ENCODE measurements at regions of chr14 and their contacts with region 1.

Region 1: GRCh38 chr14:39015360-39015961 is 87.6 kb downstream of the SEC23A start:
- DNase-seq: no peak
- ATAC-seq: no peak
- H3K4me3 Mint-ChIP-seq: no peak overlapping the region
- H3K27ac Mint-ChIP-seq: no peak overlapping the region
- H3K4me1 Mint-ChIP-seq: no peaks in the 10 kb centered on the region
- H3K27me3 Mint-ChIP-seq: no peaks in the 10 kb centered on the region
- CTCF ChIP-seq: peak; percentile 40

Region 2: GRCh38 chr14:37157987-37158386 is 1857.5 kb before region 1 on chr14:
- CTCF ChIA-PET with region 1: no interaction called
- POLR2A ChIA-PET with region 1: no interaction called
- intact Hi-C with region 1: no loop called
- DNase-seq: no peak
- ATAC-seq: no peak
- H3K4me3 Mint-ChIP-seq: no peak overlapping the region
- H3K27ac Mint-ChIP-seq: no peak overlapping the region
- H3K4me1 Mint-ChIP-seq: no peaks in the 10 kb centered on the region
- H3K27me3 Mint-ChIP-seq: no peaks in the 10 kb centered on the region
- CTCF ChIP-seq: no peak

Region 3: GRCh38 chr14:37246427-37246914 is 1769.0 kb before region 1 on chr14:
- CTCF ChIA-PET with region 1: no interaction called
- POLR2A ChIA-PET with region 1: no interaction called
- intact Hi-C with region 1: loop called (anchors 1 kb)
- DNase-seq: no peak
- ATAC-seq: no peak
- H3K4me3 Mint-ChIP-seq: no peak overlapping the region
- H3K27ac Mint-ChIP-seq: no peak overlapping the region
- H3K4me1 Mint-ChIP-seq: no peaks in the 10 kb centered on the region
- H3K27me3 Mint-ChIP-seq: no peaks in the 10 kb centered on the region
- CTCF ChIP-seq: peak; percentile 76

Region 4: GRCh38 chr14:37903343-37904191 is 1111.9 kb before region 1 on chr14:
- CTCF ChIA-PET with region 1: no interaction called
- POLR2A ChIA-PET with region 1: no interaction called
- intact Hi-C with region 1: loop called (anchors 10 kb)
- DNase-seq: no peak
- ATAC-seq: no peak
- H3K4me3 Mint-ChIP-seq: no peak overlapping the region
- H3K27ac Mint-ChIP-seq: no peak overlapping the region
- H3K4me1 Mint-ChIP-seq: no peaks in the 10 kb centered on the region
- H3K27me3 Mint-ChIP-seq: peaks cover 4% of the 10 kb centered on the region
- CTCF ChIP-seq: no peak

Region 5: GRCh38 chr14:38721822-38722431 is 293.5 kb before region 1 on chr14:
- CTCF ChIA-PET with region 1: interaction called, 3 read pairs
- POLR2A ChIA-PET with region 1: no interaction called
- intact Hi-C with region 1: loop called (anchors 1 kb)
- DNase-seq: no peak
- ATAC-seq: peak; percentile 42
- H3K4me3 Mint-ChIP-seq: no peak overlapping the region
- H3K27ac Mint-ChIP-seq: no peak overlapping the region
- H3K4me1 Mint-ChIP-seq: no peaks in the 10 kb centered on the region
- H3K27me3 Mint-ChIP-seq: no peaks in the 10 kb centered on the region
- CTCF ChIP-seq: no peak

Region 6: GRCh38 chr14:38867561-38868150 is 147.8 kb before region 1 on chr14:
- CTCF ChIA-PET with region 1: no interaction called
- POLR2A ChIA-PET with region 1: no interaction called
- intact Hi-C with region 1: loop called (anchors 5 kb)
- DNase-seq: no peak
- ATAC-seq: no peak
- H3K4me3 Mint-ChIP-seq: no peak overlapping the region
- H3K27ac Mint-ChIP-seq: no peak overlapping the region
- H3K4me1 Mint-ChIP-seq: no peaks in the 10 kb centered on the region
- H3K27me3 Mint-ChIP-seq: no peaks in the 10 kb centered on the region
- CTCF ChIP-seq: no peak

Region 7: GRCh38 chr14:38982837-38983236 is 32.6 kb before region 1 on chr14:
- CTCF ChIA-PET with region 1: no interaction called
- POLR2A ChIA-PET with region 1: no interaction called
- intact Hi-C with region 1: no loop called
- DNase-seq: no peak
- ATAC-seq: no peak
- H3K4me3 Mint-ChIP-seq: no peak overlapping the region
- H3K27ac Mint-ChIP-seq: no peak overlapping the region
- H3K4me1 Mint-ChIP-seq: no peaks in the 10 kb centered on the region
- H3K27me3 Mint-ChIP-seq: peaks cover 14% of the 10 kb centered on the region
- CTCF ChIP-seq: no peak

Measured in activated B cell treated with CpG ODN at 0.5 μM for 24 hours (primary cell).